CD4-positive, alpha-beta memory T cell (primary cell): ENCODE measurements at regions of chr11 and their contacts with region 1.

Region 1: GRCh38 chr11:62556108-62556871 is 9.7 kb upstream of the AHNAK start:
- DNase-seq: peak; percentile 85 to 97 (median 87)
- H3K4me3 ChIP-seq: peak overlapping the region; percentile 37 to 75
- H3K4me3 Mint-ChIP-seq: peak overlapping the region; percentile 82 to 91 (median 90)
- H3K27ac ChIP-seq: peak overlapping the region; percentile 95
- H3K27ac Mint-ChIP-seq: peak overlapping the region; percentile 98 to 100 (median 100)
- H3K4me1 ChIP-seq: peaks cover 98% of the 10 kb centered on the region
- H3K4me1 Mint-ChIP-seq: peaks cover 73 to 97% (median 85%) of the 10 kb centered on the region in 4 donors
- H3K27me3 ChIP-seq: no peaks in the 10 kb centered on the region
- H3K27me3 Mint-ChIP-seq: peaks cover 0 to 2% of the 10 kb centered on the region in 2 donors

Region 2: GRCh38 chr11:62394825-62395538 is 161.3 kb before region 1 on chr11:
- CTCF ChIA-PET with region 1: interaction called, 91 read pairs
- POLR2A ChIA-PET with region 1: interaction called, 5 read pairs
- intact Hi-C with region 1: loop called (anchors 1 kb)
- DNase-seq: peak; percentile 56 to 63 (median 59)
- H3K4me3 ChIP-seq: no peak overlapping the region
- H3K4me3 Mint-ChIP-seq: no peak overlapping the region
- H3K27ac ChIP-seq: no peak overlapping the region
- H3K27ac Mint-ChIP-seq: peak overlapping the region in 4 of 7 donors; percentile 58 to 68 (median 60)
- H3K4me1 ChIP-seq: peaks cover 24% of the 10 kb centered on the region
- H3K4me1 Mint-ChIP-seq: peaks cover 8 to 12% (median 10%) of the 10 kb centered on the region in 4 donors
- H3K27me3 ChIP-seq: no peaks in the 10 kb centered on the region
- H3K27me3 Mint-ChIP-seq: no peaks in the 10 kb centered on the region

Region 3: DNA sequence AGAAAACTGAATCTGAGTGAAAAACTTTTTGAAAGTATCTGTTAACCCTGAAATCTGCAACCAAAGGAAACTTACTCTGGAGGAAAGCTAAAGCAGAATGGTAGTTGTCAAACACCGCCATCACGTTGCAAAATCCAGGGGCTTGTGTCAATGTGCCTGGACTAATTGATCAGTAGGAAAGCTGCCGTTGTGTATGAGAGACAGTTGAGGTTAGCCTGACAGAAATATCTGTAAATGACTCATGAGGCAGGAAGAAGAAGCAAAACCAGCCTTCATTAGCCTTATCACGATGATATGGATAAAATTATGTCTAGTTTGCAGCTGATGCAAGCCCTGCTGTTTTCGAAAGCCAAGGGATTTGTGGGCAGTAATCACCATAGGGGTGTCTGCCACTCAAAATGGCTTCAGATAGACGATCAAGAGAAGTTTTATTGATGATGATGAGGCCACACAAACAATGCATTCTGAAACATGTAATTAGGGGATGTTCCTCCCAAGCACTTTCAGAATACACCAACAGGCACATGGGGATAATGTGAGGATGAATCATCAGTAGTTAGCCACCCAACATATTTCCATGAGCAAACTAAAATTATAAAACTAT is 128.6 kb before region 1 on chr11:
- CTCF ChIA-PET with region 1: interaction called, 405 read pairs
- POLR2A ChIA-PET with region 1: interaction called, 96 read pairs
- intact Hi-C with region 1: loop called (anchors 1 kb)
- DNase-seq: peak in 1 of 5 donors; percentile 5
- H3K4me3 ChIP-seq: no peak overlapping the region
- H3K4me3 Mint-ChIP-seq: peak overlapping the region in 7 of 8 donors; percentile 11 to 84 (median 55)
- H3K27ac ChIP-seq: no peak overlapping the region
- H3K27ac Mint-ChIP-seq: peak overlapping the region; percentile 68 to 94 (median 89)
- H3K4me1 ChIP-seq: peaks cover 45% of the 10 kb centered on the region
- H3K4me1 Mint-ChIP-seq: peaks cover 20 to 42% (median 32%) of the 10 kb centered on the region in 4 donors
- H3K27me3 ChIP-seq: no peaks in the 10 kb centered on the region
- H3K27me3 Mint-ChIP-seq: no peaks in the 10 kb centered on the region

Region 4: GRCh38 chr11:62542750-62543567 is 13.3 kb before region 1 on chr11:
- CTCF ChIA-PET with region 1: interaction called, 450 read pairs
- POLR2A ChIA-PET with region 1: interaction called, 751 read pairs
- intact Hi-C with region 1: loop called (anchors 1 kb)
- DNase-seq: peak; percentile 71 to 92 (median 71)
- H3K4me3 ChIP-seq: peak overlapping the region; percentile 91 to 94
- H3K4me3 Mint-ChIP-seq: peak overlapping the region; percentile 97 to 99 (median 98)
- H3K27ac ChIP-seq: peak overlapping the region; percentile 97
- H3K27ac Mint-ChIP-seq: peak overlapping the region; percentile 94 to 99 (median 98)
- H3K4me1 ChIP-seq: peaks cover 77% of the 10 kb centered on the region
- H3K4me1 Mint-ChIP-seq: peaks cover 48 to 88% (median 63%) of the 10 kb centered on the region in 4 donors
- H3K27me3 ChIP-seq: no peaks in the 10 kb centered on the region
- H3K27me3 Mint-ChIP-seq: no peaks in the 10 kb centered on the region

Region 5: GRCh38 chr11:62601394-62602140 is 45.3 kb after region 1 on chr11 and contains the start of gene MTA2:
- CTCF ChIA-PET with region 1: interaction called, 6 read pairs
- POLR2A ChIA-PET with region 1: interaction called, 17 read pairs
- intact Hi-C with region 1: no loop called
- DNase-seq: peak; percentile 99 to 100 (median 100)
- H3K4me3 ChIP-seq: peak within 1 kb of the TSS; percentile 71 to 82
- H3K4me3 Mint-ChIP-seq: peak within 1 kb of the TSS; percentile 91 to 99 (median 96)
- H3K27ac ChIP-seq: peak within 1 kb of the TSS; percentile 91
- H3K27ac Mint-ChIP-seq: peak within 1 kb of the TSS; percentile 90 to 99 (median 98)
- H3K4me1 ChIP-seq: peaks cover 35% of the 10 kb centered on the region
- H3K4me1 Mint-ChIP-seq: peaks cover 33 to 60% (median 46%) of the 10 kb centered on the region in 4 donors
- H3K27me3 ChIP-seq: no peaks in the 10 kb centered on the region
- H3K27me3 Mint-ChIP-seq: no peaks in the 10 kb centered on the region
- total RNA-seq, gene MTA2: 207 to 210 TPM

Region 6: GRCh38 chr11:62715150-62716135 is 159.2 kb after region 1 on chr11:
- CTCF ChIA-PET with region 1: no interaction called
- POLR2A ChIA-PET with region 1: no interaction called
- intact Hi-C with region 1: no loop called
- DNase-seq: no peak
- H3K4me3 ChIP-seq: no peak overlapping the region
- H3K4me3 Mint-ChIP-seq: peak overlapping the region in 1 of 8 donors; percentile 45
- H3K27ac ChIP-seq: no peak overlapping the region
- H3K27ac Mint-ChIP-seq: peak overlapping the region in 6 of 7 donors; percentile 19 to 70 (median 58)
- H3K4me1 ChIP-seq: peaks cover 29% of the 10 kb centered on the region
- H3K4me1 Mint-ChIP-seq: peaks cover 28 to 56% (median 45%) of the 10 kb centered on the region in 4 donors
- H3K27me3 ChIP-seq: no peaks in the 10 kb centered on the region
- H3K27me3 Mint-ChIP-seq: no peaks in the 10 kb centered on the region

Region 7: DNA sequence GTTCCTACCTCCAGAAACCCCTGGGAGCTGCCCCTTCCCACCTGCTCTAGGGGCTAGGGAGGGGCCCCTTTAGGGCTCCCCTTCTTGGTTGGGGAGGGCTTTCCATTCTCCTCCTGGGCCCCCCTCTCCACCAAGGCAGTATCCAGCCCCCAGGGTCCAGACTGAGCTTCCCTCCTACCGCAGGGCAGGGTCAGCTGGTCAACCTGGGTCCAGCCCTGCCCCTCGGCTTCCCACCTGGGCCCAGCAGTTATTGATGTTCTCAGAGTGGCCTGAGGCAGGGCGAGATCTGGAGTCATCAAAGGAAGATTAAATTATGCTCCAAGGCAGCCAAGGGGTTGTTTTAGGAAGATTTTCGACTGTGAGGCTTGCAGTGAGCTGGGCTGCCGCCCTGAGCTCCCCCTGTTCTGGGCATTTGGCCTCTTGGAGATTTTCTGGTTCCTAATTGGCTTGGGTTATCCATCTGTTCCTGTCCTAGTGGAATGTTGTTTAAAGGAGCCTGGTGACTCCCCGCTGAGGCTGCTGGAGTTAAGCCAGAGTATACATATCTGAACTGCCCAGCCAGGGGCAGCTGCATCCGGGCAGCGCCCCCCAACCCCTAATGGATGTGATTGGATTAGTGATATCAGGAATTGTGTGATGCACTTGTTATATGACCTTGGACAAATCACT is 461.1 kb after region 1 on chr11:
- CTCF ChIA-PET with region 1: no interaction called
- POLR2A ChIA-PET with region 1: no interaction called
- intact Hi-C with region 1: no loop called
- DNase-seq: no peak
- H3K4me3 ChIP-seq: no peak overlapping the region
- H3K4me3 Mint-ChIP-seq: no peak overlapping the region
- H3K27ac ChIP-seq: no peak overlapping the region
- H3K27ac Mint-ChIP-seq: no peak overlapping the region
- H3K4me1 ChIP-seq: no peaks in the 10 kb centered on the region
- H3K4me1 Mint-ChIP-seq: no peaks in the 10 kb centered on the region
- H3K27me3 ChIP-seq: no peaks in the 10 kb centered on the region
- H3K27me3 Mint-ChIP-seq: peaks cover 13 to 28% of the 10 kb centered on the region in 2 donors